ENCODE measurements at regions of chr1 and their contacts with region 1.

Region 1: DNA sequence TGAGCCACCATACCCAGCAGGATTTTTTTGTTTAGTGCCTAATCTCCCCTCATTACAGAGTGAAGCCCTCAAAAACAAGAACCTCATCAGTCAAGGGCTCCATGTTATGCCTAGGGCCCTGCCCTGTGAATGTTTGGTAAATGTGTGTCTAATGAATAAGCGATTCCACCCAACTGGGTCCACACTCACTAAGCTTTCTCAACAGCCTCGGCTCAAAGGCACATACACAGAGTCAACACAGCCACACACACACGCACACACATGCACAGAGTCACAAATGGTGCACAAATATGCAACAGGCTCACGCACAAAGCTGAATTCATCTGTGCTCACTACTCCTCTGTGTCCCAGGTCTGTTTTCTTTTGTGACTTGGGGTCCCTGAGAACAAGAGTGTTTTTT is 11.7 kb upstream of the SYNC start:
- DNase-seq: no peak
- H3K4me3 ChIP-seq: no peak overlapping the region
- CTCF ChIP-seq: no peak

Region 2: DNA sequence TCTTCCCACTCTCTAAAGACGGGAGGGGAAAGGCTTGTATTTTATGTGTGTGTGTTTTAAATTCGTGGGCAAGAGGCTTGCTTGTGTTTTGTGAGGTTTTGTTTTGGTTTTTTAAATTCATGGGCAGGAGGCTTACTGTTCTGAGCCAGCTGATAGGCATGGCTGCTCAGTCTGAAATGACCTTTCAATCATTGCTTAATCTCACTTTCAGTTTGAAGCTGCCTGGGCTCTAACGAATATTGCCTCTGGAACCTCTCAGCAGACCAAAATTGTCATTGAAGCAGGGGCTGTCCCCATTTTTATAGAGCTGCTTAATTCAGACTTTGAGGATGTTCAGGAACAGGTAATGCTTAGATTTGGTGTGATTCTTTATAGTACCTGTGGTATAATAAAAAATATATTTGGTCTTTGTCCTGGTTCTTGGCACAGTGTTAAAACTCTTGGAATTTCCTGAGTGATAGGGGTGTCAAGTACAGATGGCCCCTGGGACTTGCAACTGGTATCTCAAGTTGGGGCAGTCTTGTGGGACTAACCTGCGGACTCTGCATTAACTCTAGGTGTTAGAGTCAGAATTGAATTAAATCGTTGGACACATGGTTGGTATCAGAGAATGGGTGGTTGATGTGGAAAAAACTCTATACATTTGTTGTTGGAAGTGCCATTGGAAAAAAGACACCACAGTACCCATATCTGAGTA is 554.9 kb before region 1 on chr1:
- in situ Hi-C with region 1: no loop called
- DNase-seq: no peak
- H3K4me3 ChIP-seq: no peak overlapping the region
- CTCF ChIP-seq: no peak

Region 3: GRCh38 chr1:32782086-32782485 is 67.8 kb after region 1 on chr1:
- in situ Hi-C with region 1: loop called (anchors 5 kb)
- DNase-seq: no peak
- H3K4me3 ChIP-seq: no peak overlapping the region
- CTCF ChIP-seq: no peak